Psoas muscle (tissue), 8 donors: ENCODE measurements at regions of chr18 and their contacts with region 1.

Region 1: DNA sequence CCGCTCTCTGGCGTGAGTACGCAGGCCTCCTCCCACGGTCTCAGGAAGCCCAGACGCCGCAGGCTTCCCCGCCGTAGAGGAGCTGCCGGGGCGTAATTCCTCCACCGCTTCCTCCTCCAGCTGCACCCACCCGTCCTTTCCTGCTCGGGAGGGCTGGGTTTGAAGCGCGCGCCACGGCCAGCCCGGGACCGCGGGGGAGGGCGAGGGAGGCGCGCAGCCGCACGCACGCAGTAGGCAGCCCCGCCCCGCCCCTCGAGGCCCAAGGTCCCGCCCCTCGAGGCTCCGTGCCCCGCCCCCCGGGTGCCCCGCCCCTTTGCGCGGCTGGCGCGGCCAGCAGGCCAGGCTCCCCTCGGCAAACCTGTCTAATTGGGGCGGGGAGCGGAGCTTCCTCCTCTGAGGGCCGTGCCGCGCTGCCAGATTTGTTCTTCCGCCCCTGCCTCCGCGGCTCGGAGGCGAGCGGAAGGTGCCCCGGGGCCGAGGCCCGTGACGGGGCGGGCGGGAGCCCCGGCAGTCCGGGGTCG is at the start of gene MALT1:
- DNase-seq: peak; percentile 91 to 97
- ATAC-seq: peak; percentile 96 to 98 (median 97)
- H3K4me3 ChIP-seq: peak within 1 kb of the TSS; percentile 91
- H3K27ac ChIP-seq: peak within 1 kb of the TSS; percentile 97
- H3K4me1 ChIP-seq: peaks cover 22% of the 10 kb centered on the region
- H3K27me3 ChIP-seq: no peaks in the 10 kb centered on the region
- CTCF ChIP-seq: no peak
- total RNA-seq, gene MALT1: 7.1 to 11.2 (median 9.8) TPM

Region 2: DNA sequence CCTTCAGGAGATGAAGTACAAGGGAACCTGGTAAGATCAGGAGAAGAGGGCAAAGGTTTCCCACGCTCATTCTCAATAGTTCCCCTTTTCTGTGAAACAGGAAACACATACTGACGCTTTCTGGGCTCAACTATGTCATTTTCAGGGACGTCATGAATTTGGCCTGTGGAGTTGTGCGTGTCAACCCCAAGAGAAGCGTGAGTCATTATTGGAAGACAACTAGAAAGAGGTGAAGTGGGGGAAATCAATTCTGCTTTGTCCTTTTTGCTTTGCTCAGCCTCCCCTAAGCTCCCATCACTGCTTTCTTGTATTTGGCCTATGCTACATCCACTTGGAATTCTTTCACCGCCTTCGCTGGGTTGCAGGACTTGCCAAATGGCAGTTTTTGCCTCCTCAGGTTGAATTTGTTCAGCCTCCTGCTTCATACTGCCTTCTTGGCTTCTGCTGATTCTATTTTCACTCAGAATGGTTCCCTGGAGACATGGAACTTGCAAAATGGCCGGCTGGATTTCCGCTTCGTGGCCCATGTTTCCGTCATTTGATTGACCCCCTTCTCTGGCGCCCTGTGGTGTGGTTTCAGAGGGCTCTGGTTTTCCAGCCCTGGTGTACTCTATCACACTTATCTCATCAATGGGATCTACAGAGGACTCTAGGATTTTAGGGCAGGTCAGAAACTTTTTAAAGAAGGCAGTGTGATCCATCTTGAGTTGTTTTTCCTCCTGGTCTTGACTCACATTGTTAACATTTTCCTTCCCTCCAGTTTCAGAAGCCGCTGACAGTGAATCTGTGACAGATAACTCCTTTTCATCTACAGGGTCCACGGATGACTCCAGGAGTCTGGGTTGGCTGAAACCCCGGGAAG is 135.6 kb before region 1 on chr18:
- intact Hi-C with region 1: loop called (anchors 5 to 10 kb)
- DNase-seq: no peak
- ATAC-seq: no peak
- H3K4me3 ChIP-seq: no peak overlapping the region
- H3K27ac ChIP-seq: no peak overlapping the region
- H3K4me1 ChIP-seq: peaks cover 10% of the 10 kb centered on the region
- H3K27me3 ChIP-seq: no peaks in the 10 kb centered on the region
- CTCF ChIP-seq: no peak

Region 3: GRCh38 chr18:58632552-58632951 is 38.6 kb before region 1 on chr18:
- intact Hi-C with region 1: loop called in 1 of 2 experiments (anchors 5 kb)
- DNase-seq: peak; percentile 39 to 80
- ATAC-seq: peak; percentile 72 to 83 (median 80)
- H3K4me3 ChIP-seq: no peak overlapping the region
- H3K27ac ChIP-seq: peak overlapping the region; percentile 79
- H3K4me1 ChIP-seq: peaks cover 49% of the 10 kb centered on the region
- H3K27me3 ChIP-seq: no peaks in the 10 kb centered on the region
- CTCF ChIP-seq: no peak

Region 4: DNA sequence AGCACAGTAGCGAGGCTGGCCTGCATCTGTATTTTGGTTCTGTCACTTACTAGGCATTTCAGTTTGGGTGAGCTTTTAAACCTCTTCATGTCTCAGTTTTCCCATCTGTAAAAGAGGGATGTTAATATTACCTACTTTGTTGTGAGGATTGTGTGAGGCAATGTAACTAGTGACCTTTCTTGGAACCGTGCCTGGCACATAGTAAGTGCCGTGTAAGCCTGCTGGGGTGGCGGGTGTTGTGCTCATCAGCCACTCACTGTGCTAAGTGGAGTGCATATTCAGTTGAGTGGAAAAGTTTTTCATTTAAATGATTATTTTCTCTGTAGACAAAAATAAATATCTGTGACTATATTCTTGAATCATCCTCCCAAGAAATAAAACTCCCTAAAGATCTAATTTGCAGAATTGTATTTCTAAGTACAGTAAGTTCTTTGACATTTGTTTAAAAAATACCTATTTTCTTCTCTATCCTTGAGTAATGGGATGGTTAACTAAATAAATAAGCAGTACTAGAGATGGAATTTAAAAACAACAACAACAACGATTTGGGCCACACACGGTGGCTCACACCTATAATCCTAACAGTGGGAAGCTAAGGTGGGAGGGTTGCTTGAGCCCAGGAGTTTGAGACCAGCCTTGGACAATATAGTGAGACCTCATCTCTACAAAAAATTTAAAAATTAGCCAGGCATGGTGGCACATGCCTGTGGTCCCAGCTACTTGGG is 56.8 kb after region 1 on chr18:
- intact Hi-C with region 1: loop called in 1 of 2 experiments (anchors 10 kb)
- DNase-seq: no peak
- ATAC-seq: peak in 3 of 4 donors; percentile 54 to 73 (median 57)
- H3K4me3 ChIP-seq: no peak overlapping the region
- H3K27ac ChIP-seq: peak overlapping the region; percentile 63
- H3K4me1 ChIP-seq: peaks cover 10% of the 10 kb centered on the region
- H3K27me3 ChIP-seq: no peaks in the 10 kb centered on the region
- CTCF ChIP-seq: no peak

Region 5: DNA sequence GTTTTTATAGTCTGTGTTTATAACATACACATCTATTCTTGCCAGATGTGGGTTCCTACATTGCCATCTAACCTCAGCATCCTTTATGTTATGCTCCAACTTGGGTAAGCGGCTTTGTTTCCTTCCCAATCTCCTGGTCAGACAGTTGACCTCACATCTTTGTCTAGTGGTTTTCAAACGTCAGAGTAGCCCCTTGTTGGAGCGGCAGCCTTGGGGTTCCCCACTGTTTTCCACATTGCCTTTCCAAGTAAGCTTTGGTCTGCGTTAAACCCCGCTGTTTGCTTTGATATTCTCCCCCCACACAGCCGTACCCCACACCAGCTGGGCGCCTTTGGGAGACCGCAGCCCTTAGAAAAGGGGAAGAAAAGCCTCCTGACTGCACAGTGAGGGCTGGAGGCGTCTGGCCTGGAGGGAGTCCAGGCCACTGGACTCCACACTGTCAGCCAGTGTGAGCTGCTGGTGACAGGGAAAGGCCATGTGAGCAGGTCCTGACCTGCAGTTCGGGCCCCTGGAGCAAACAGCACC is 83.4 kb after region 1 on chr18:
- intact Hi-C with region 1: loop called in 1 of 2 experiments (anchors 5 kb)
- DNase-seq: peak in 1 of 2 donors; percentile 59
- ATAC-seq: peak; percentile 69 to 85 (median 80)
- H3K4me3 ChIP-seq: no peak overlapping the region
- H3K27ac ChIP-seq: peak overlapping the region; percentile 71
- H3K4me1 ChIP-seq: peaks cover 24% of the 10 kb centered on the region
- H3K27me3 ChIP-seq: no peaks in the 10 kb centered on the region
- CTCF ChIP-seq: no peak

Region 6: GRCh38 chr18:58864146-58865032 is 193.2 kb after region 1 on chr18 and contains the start of gene ZNF532:
- intact Hi-C with region 1: no loop called
- DNase-seq: no peak
- ATAC-seq: peak; percentile 24 to 51 (median 32)
- H3K4me3 ChIP-seq: peak within 1 kb of the TSS; percentile 73
- H3K27ac ChIP-seq: peak within 1 kb of the TSS; percentile 99
- H3K4me1 ChIP-seq: peaks cover 76% of the 10 kb centered on the region
- H3K27me3 ChIP-seq: no peaks in the 10 kb centered on the region
- CTCF ChIP-seq: no peak
- total RNA-seq, gene ZNF532: 68.8 to 105 (median 84.7) TPM